Upper lobe of right lung (tissue), 1 donor: ENCODE measurements at regions of chr1 and their contacts with region 1.

Region 1: DNA sequence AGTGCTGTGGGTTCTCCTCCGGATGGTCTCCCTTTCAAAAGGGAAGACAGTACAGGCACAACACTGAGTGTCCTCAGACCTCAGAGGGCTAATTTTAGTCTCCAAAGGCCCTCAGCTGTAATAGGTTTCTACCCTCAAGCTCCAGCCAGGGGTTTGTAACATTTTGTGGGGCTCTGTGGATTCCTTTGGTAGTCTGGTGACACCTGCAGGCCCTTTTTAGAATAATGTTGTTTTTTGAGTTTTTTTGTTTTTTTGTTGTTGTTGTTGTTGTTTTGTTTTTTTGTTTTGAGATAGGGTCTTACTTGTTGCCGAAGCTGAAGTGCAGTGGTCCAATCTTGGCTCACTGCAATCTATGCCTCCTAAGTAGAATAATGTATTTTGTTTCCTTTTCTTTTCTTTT is 15.0 kb upstream of the TMEM201 start:
- DNase-seq: no peak
- ATAC-seq: peak; percentile 34
- H3K4me3 ChIP-seq: no peak overlapping the region
- H3K27ac ChIP-seq: no peak overlapping the region
- H3K4me1 ChIP-seq: no peaks in the 10 kb centered on the region
- H3K27me3 ChIP-seq: no peaks in the 10 kb centered on the region
- CTCF ChIP-seq: peak; percentile 30

Region 2: DNA sequence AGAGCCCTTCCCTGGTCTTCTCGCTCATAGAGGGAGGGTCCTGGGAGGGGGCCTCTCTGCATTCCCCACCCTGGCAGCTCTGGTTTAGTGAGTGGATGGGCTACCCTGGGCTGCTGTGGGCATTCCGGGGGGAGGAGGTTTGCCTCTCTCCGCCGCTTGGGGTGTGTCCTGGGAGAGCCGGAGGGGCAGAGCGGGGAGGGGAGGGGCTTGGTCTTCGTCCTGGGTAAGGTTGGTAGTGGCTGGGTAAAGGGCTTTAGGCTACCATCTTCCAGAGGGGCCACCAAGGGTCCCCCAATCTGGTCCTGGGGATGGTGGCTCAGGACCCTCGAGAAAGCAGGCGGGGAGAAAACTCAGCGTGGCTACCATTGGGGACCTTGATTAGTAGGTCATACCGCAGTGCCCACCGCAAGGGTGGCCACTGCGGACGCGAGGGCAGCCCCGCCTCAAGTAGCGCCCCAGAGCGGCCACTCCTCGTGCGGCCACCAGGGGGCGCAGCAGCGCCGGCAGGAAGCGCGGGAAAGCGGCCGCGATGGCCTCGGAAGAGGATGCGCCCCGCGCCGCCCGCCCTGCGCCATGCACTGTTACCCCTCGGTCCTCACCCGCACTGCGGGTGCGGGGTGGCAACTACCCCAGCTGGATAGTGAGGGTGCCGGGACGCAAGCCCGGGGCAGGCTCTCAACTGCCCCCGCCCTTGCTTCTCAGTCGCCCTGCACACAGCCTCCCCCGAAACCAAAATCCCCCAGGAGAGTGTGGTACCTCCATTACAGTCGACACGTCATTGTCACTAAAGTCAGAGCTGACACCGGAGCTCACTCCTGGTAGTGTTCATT is 78.6 kb before region 1 on chr1:
- intact Hi-C with region 1: loop called (anchors 5 kb)
- DNase-seq: peak; percentile 79
- ATAC-seq: peak; percentile 89
- H3K4me3 ChIP-seq: peak overlapping the region; percentile 26
- H3K27ac ChIP-seq: no peak overlapping the region
- H3K4me1 ChIP-seq: peaks cover 5% of the 10 kb centered on the region
- H3K27me3 ChIP-seq: no peaks in the 10 kb centered on the region
- CTCF ChIP-seq: peak; percentile 98

Region 3: DNA sequence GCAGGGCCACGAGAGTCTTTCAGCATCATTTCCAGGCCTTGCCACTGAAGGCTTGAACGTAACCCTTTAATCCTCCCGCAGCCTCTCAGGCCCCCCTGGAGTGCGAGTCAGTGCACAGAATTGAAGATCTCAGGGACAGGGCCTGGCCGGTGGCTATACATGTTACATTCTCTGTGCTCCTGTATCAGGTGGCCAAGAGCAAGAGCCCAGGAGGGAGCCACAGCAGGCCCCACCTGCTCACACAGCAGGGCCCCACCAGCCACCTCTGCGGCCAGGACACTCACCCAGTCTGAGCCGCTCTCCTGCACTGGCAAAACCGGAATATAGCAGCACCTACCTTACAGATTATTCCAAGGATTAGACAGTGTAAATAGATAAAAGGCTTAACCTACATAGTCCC is 68.5 kb before region 1 on chr1:
- intact Hi-C with region 1: no loop called
- DNase-seq: no peak
- ATAC-seq: no peak
- H3K4me3 ChIP-seq: no peak overlapping the region
- H3K27ac ChIP-seq: no peak overlapping the region
- H3K4me1 ChIP-seq: no peaks in the 10 kb centered on the region
- H3K27me3 ChIP-seq: no peaks in the 10 kb centered on the region
- CTCF ChIP-seq: no peak

Region 4: GRCh38 chr1:9529190-9529589 is 44.5 kb before region 1 on chr1:
- intact Hi-C with region 1: no loop called
- DNase-seq: no peak
- ATAC-seq: peak; percentile 32
- H3K4me3 ChIP-seq: no peak overlapping the region
- H3K27ac ChIP-seq: no peak overlapping the region
- H3K4me1 ChIP-seq: no peaks in the 10 kb centered on the region
- H3K27me3 ChIP-seq: no peaks in the 10 kb centered on the region
- CTCF ChIP-seq: no peak